Activated T-helper 1 cell treated with anti-CD3 and anti-CD28 coated beads, Interleukin-12 subunit alpha, Interleukin-12 subunit beta, Interleukin-2, Interleukin-4 antibody, amounts not matched to agents 30 ng/mL and 10 ng/mL and 1 ng/mL, durations not matched to agents 14 hours and 24 hours and 36 hours (primary cell): ENCODE measurements at regions of chr5 and their contacts with region 1.

Region 1: GRCh38 chr5:56200856-56201666 is 32.1 kb downstream of the ANKRD55 start:
- DNase-seq: peak; percentile 48
- H3K4me3 Mint-ChIP-seq: no peak overlapping the region
- H3K27ac Mint-ChIP-seq: no peak overlapping the region
- H3K4me1 Mint-ChIP-seq: peaks cover 27% of the 10 kb centered on the region
- H3K27me3 Mint-ChIP-seq: no peaks in the 10 kb centered on the region

Region 2: GRCh38 chr5:56259002-56259511 is 58.0 kb after region 1 on chr5:
- intact Hi-C with region 1: loop called (anchors 2 kb)
- DNase-seq: no peak
- H3K4me3 Mint-ChIP-seq: no peak overlapping the region
- H3K27ac Mint-ChIP-seq: no peak overlapping the region
- H3K4me1 Mint-ChIP-seq: no peaks in the 10 kb centered on the region
- H3K27me3 Mint-ChIP-seq: peaks cover 14% of the 10 kb centered on the region

Region 3: DNA sequence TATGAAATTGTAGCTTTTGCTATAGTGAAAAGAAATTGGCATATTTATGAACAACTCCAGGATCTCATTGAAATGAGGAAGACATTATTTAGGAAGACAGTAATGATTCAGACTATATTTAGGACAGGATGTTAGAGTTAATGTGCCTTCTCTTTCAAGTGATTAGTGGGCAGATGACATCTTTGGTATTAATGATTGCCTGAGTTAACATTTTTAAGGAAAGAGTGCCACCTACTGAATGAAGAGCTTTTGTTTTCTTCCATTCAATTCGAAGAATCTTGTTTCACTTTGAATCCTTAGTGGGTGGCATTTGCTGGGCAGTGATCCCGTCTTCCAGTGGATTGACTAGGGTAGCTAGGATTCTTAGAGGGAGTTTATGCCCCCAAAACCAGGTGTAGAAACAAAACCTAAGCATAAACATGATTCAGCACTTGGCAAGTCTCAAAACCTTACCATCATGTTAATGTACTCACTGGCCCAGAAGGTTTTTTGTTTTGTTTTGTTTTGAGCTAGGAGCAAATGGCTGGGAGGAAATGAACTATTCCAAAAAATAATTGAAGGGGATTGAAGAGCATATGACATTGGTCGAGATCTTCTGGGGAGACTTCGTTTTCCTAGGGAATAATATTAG is 637.5 kb after region 1 on chr5:
- intact Hi-C with region 1: loop called (anchors 5 kb)
- DNase-seq: no peak
- H3K4me3 Mint-ChIP-seq: peak overlapping the region; percentile 25
- H3K27ac Mint-ChIP-seq: no peak overlapping the region
- H3K4me1 Mint-ChIP-seq: peaks cover 58% of the 10 kb centered on the region
- H3K27me3 Mint-ChIP-seq: no peaks in the 10 kb centered on the region